ENCODE measurements at regions of chr20 and their contacts with region 1.

Region 1: GRCh38 chr20:32521780-32522525 is 63.2 kb downstream of the NOL4L start:
- DNase-seq: peak; percentile 92
- ATAC-seq: peak; percentile 95
- H3K4me3 Mint-ChIP-seq: no peak overlapping the region; the same call in 1 of the 2 replicates
- H3K27ac Mint-ChIP-seq: no peak overlapping the region
- H3K4me1 Mint-ChIP-seq: peaks cover 8% of the 10 kb centered on the region
- H3K27me3 Mint-ChIP-seq: no peaks in the 10 kb centered on the region; the same call in 1 of the 2 replicates
- CTCF ChIP-seq: peak; percentile 74

Region 2: GRCh38 chr20:32411955-32412706 is 109.8 kb before region 1 on chr20:
- CTCF ChIA-PET with region 1: no interaction called
- POLR2A ChIA-PET with region 1: no interaction called
- DNase-seq: no peak
- ATAC-seq: no peak
- H3K4me3 Mint-ChIP-seq: no peak overlapping the region
- H3K27ac Mint-ChIP-seq: no peak overlapping the region
- H3K4me1 Mint-ChIP-seq: peaks cover 16% of the 10 kb centered on the region
- H3K27me3 Mint-ChIP-seq: no peaks in the 10 kb centered on the region
- CTCF ChIP-seq: no peak

Region 3: GRCh38 chr20:32681175-32682084 is 159.5 kb after region 1 on chr20:
- CTCF ChIA-PET with region 1: interaction called, 10 read pairs
- POLR2A ChIA-PET with region 1: no interaction called
- DNase-seq: peak; percentile 63
- ATAC-seq: peak; percentile 80
- H3K4me3 Mint-ChIP-seq: peak overlapping the region; percentile 33
- H3K27ac Mint-ChIP-seq: peak overlapping the region; percentile 86
- H3K4me1 Mint-ChIP-seq: peaks cover 38% of the 10 kb centered on the region
- H3K27me3 Mint-ChIP-seq: no peaks in the 10 kb centered on the region
- CTCF ChIP-seq: no peak

Measured in WTC11 (cell line).